Natural killer cell (primary cell): ENCODE measurements at regions of chr18 and their contacts with region 1.

Region 1: DNA sequence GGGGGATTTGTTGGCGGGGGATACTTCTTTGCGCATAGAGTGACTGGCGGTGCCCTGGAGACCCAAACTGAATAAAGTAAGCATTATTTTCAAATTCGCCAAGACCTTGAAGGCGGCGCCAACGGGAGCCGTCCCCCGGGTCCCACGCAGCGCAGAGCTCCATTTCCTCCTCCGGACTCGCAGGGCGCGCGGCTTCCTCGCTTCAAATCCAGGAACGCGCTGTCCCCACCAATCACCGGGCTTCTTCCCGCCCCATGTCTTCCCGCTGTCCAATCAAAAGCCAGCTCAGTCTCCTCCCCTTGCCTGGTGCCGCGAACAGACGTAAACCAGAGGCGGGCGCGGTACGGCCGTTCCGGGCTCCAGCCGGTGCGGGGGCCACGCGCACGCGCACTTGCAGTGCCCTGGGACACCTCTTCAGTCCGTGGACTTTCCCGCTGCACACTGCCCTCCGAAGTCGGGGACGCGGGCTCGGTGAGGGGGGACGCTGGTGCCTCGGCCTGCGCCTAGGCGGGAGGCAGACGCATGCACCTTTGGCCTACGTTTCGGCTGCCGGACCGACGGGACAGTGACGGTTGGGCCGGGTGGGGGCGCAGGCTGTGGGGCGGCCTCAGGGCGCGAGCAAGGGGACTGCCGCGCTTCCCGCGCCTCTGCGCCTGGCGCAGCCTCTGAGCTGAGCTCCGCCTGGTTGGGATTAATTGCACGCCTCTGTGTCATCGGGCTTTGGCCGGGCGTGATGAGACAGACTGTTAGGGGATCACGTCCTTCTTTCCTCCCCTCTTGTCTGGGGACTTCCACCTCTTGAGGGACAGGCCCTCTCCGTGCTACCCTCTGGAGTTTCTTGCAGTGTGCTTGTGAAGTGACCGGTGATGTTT is at the start of gene CEP192:
- DNase-seq: peak; percentile 95 to 99
- ATAC-seq: peak; percentile 92 to 96 (median 94)
- H3K4me3 ChIP-seq: peak within 1 kb of the TSS; percentile 56
- H3K4me3 Mint-ChIP-seq: peak within 1 kb of the TSS; percentile 97
- H3K27ac ChIP-seq: peak within 1 kb of the TSS; percentile 82
- H3K27ac Mint-ChIP-seq: peak within 1 kb of the TSS; percentile 83 to 91
- H3K4me1 ChIP-seq: peaks cover 21% of the 10 kb centered on the region
- H3K4me1 Mint-ChIP-seq: peaks cover 37 to 39% of the 10 kb centered on the region in 2 donors
- H3K27me3 ChIP-seq: no peaks in the 10 kb centered on the region
- H3K27me3 Mint-ChIP-seq: peaks cover 0 to 3% of the 10 kb centered on the region in 2 donors
- CTCF ChIP-seq: peak; percentile 22
- total RNA-seq, gene CEP192: 41.3 to 47.9 (median 43.4) TPM

Region 2: GRCh38 chr18:12947355-12948041 is 43.7 kb before region 1 on chr18 and contains the start of gene SEH1L:
- intact Hi-C with region 1: loop called (anchors 1 kb)
- DNase-seq: peak; percentile 96 to 98
- ATAC-seq: peak; percentile 86 to 96 (median 86)
- H3K4me3 ChIP-seq: peak within 1 kb of the TSS; percentile 93
- H3K4me3 Mint-ChIP-seq: peak within 1 kb of the TSS; percentile 97
- H3K27ac ChIP-seq: peak within 1 kb of the TSS; percentile 96
- H3K27ac Mint-ChIP-seq: peak within 1 kb of the TSS; percentile 90 to 92
- H3K4me1 ChIP-seq: peaks cover 17% of the 10 kb centered on the region
- H3K4me1 Mint-ChIP-seq: peaks cover 11 to 16% of the 10 kb centered on the region in 2 donors
- H3K27me3 ChIP-seq: no peaks in the 10 kb centered on the region
- H3K27me3 Mint-ChIP-seq: no peaks in the 10 kb centered on the region
- CTCF ChIP-seq: no peak
- total RNA-seq, gene SEH1L: 24.5 to 28.4 (median 26.5) TPM

Region 3: GRCh38 chr18:13067124-13067523 is 75.9 kb after region 1 on chr18:
- intact Hi-C with region 1: no loop called
- DNase-seq: no peak
- ATAC-seq: no peak
- H3K4me3 ChIP-seq: no peak overlapping the region
- H3K4me3 Mint-ChIP-seq: no peak overlapping the region
- H3K27ac ChIP-seq: no peak overlapping the region
- H3K27ac Mint-ChIP-seq: no peak overlapping the region
- H3K4me1 ChIP-seq: no peaks in the 10 kb centered on the region
- H3K4me1 Mint-ChIP-seq: peaks cover 0 to 24% of the 10 kb centered on the region in 2 donors
- H3K27me3 ChIP-seq: no peaks in the 10 kb centered on the region
- H3K27me3 Mint-ChIP-seq: no peaks in the 10 kb centered on the region
- CTCF ChIP-seq: no peak

Region 4: DNA sequence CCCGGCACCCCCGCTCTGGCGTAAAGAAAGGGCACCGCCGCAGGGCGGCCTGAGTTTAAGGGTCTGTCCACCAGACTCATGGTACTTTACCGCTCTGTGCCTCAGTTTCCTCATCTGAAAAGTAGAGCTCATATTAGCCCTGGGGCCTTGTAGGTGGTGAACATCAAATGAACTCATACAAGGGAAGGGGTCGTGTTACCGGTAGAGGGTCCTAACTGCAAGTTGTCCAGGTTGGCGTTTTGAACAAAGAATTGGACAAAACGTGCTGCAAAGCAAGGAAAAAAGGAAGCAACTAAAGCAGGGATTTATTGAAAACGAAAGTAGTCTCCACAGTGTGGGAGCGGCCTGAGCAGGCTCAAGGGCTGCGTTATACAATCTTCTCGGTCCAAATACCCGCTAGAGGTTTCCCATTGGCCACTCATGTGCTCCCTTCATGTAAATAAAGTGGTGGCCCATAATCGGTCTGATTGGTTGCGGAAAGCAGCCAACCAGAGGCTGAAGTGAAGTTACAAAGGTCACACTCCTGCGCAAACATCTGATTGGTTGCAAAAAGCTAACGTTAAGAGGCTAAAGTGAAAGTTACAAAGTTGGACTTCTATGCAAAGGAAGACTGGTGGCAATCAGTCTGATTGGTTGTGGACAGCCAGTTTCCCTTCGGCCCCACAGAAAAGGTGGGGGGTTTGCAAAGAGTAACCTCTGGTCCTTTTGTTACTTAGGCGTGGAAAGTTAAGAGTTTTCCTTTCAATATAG is 146.6 kb after region 1 on chr18:
- intact Hi-C with region 1: loop called (anchors 2 kb)
- DNase-seq: peak; percentile 64 to 86
- ATAC-seq: peak; percentile 87 to 93 (median 92)
- H3K4me3 ChIP-seq: peak overlapping the region; percentile 56
- H3K4me3 Mint-ChIP-seq: peak overlapping the region; percentile 99
- H3K27ac ChIP-seq: peak overlapping the region; percentile 83
- H3K27ac Mint-ChIP-seq: peak overlapping the region; percentile 96
- H3K4me1 ChIP-seq: peaks cover 21% of the 10 kb centered on the region
- H3K4me1 Mint-ChIP-seq: peaks cover 29 to 31% of the 10 kb centered on the region in 2 donors
- H3K27me3 ChIP-seq: no peaks in the 10 kb centered on the region
- H3K27me3 Mint-ChIP-seq: no peaks in the 10 kb centered on the region
- CTCF ChIP-seq: no peak